SK-N-SH (cell line): ENCODE measurements at regions of chr4 and their contacts with region 1.

Region 1: GRCh38 chr4:40881096-40881495 is 131.3 kb downstream of the NSUN7 start:
- DNase-seq: no peak
- H3K4me3 ChIP-seq: no peak overlapping the region
- H3K27ac ChIP-seq: no peak overlapping the region
- H3K4me1 ChIP-seq: peaks cover 0 to 13% of the 10 kb centered on the region in 2 experiments; a peak in 1 of 4 replicates
- H3K27me3 ChIP-seq: no peaks in the 10 kb centered on the region
- CTCF ChIP-seq: no peak
- EP300 ChIP-seq: no peak
- RAD21 ChIP-seq: no peak

Region 2: DNA sequence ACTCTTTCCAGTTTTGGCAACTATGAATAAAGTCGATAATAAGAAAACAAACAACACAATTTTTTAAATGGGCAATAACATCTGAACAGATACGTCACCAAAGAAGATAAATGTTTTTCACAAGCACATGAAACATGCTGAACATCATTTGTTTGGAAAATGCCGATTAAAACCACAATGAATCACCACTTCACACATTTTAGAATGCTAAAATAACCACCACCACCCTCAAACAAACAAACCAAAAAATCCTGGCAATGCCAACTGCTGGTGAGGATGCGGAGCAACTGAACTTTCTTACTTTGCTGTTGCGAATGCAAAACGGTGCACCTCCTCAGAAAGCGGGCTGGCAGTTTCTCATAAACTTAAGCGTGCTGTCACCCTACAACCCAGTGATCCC is 15.4 kb before region 1 on chr4:
- CTCF ChIA-PET with region 1: no interaction called
- POLR2A ChIA-PET with region 1: no interaction called
- DNase-seq: no peak
- H3K4me3 ChIP-seq: no peak overlapping the region
- H3K27ac ChIP-seq: no peak overlapping the region
- H3K4me1 ChIP-seq: peaks cover 0 to 5% of the 10 kb centered on the region in 2 experiments; a peak in 1 of 4 replicates
- H3K27me3 ChIP-seq: no peaks in the 10 kb centered on the region
- CTCF ChIP-seq: no peak
- EP300 ChIP-seq: no peak
- RAD21 ChIP-seq: no peak

Region 3: DNA sequence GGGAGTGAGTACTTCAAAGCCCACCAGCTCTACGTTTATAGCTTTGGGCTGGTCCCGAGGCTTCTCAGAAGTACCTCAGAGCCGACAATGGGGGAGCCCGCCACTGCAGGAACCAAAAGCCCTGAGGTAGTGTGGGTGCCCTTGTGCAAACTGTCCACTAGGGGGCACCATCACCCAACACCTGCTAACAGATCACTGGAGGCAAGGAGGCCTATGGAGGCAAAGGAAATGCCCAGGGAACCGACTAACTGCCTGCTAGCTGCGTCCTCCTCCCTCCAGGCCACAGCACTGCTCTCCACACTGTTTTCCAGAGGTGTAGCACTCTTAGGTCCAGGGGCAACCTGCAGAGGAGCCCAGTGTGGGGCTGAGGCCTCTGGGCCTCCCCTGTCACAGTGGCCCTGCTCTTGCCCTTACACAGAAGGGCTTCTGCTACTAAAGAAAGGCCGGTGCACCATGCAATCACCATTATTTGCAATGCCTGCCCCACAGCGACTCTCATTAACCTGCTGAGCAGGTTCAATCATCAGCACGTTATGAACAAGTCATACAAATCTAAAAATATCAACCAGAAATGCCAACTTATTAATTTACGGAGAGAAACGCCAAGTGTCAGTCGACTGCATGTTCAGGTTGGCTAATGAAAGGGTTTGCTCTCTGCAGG is 27.7 kb after region 1 on chr4:
- CTCF ChIA-PET with region 1: interaction called, 10 read pairs
- POLR2A ChIA-PET with region 1: no interaction called
- DNase-seq: peak; percentile 77
- H3K4me3 ChIP-seq: peak overlapping the region in 1 of 2 experiments; percentile 43; a peak in 1 of 4 replicates
- H3K27ac ChIP-seq: peak overlapping the region; percentile 83 to 92
- H3K4me1 ChIP-seq: peaks cover 13 to 24% of the 10 kb centered on the region in 2 experiments
- H3K27me3 ChIP-seq: no peaks in the 10 kb centered on the region
- CTCF ChIP-seq: peak; percentile 96
- EP300 ChIP-seq: no peak
- RAD21 ChIP-seq: peak; percentile 80